Heart left ventricle (tissue), 16 donors: ENCODE measurements at regions of chr6 and their contacts with region 1.

Region 1: DNA sequence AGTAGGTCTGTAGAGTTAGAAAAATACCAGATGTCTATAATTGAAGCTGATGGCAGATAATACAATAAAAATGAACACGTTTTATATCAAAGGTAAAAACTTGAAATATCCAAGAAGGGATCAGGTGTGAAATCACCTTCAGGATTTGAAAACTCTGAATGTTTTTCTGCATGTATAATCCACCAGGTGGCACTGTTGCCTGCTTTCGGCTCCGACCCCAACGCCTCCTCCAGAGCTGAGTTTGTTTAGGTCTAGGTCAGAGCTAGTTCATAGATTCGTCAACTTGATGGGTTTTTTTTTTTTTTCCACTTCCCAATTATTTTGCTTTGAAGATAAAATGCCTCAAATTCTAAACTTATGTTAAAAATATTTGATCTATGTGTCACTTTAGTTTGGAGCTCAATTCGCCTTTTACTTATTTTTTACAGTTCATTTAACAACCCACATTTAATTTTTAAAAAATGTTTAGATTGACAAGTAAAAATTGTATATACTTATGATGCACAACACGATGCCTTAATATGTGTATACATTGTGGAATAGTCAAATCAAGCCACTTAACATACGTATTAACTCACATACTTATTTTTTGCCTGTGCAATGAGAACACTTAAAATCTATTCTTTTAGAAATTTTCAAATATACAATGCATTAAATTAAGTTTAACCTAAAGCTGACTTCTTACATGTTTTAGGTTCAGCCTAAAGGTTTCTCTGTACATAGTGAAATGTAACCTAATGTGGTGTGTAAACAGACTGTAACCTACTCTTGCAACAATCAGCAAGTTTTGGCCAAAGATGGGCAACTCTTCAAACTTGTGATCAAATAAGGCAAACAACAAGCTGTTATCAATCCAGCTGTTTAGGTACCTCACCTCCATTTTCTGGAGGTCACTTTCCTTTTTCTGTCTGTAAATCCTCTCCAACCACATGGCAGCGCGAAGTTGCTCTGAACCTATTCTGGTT is 39.4 kb upstream of the ENPP4 start:
- DNase-seq: peak; percentile 37 to 70 (median 47)
- ATAC-seq: peak in 3 of 4 donors; percentile 63 to 68 (median 67)
- H3K4me3 ChIP-seq: no peak overlapping the region
- H3K27ac ChIP-seq: no peak overlapping the region
- H3K4me1 ChIP-seq: peaks cover 0 to 3% (median 0%) of the 10 kb centered on the region in 12 donors
- H3K27me3 ChIP-seq: peaks cover 0 to 9% (median 0%) of the 10 kb centered on the region in 9 donors
- CTCF ChIP-seq: peak; percentile 71 to 90 (median 84)
- POLR2A ChIP-seq: no peak

Region 2: GRCh38 chr6:46144270-46144669 is 53.9 kb after region 1 on chr6:
- intact Hi-C with region 1: no loop called
- DNase-seq: no peak
- ATAC-seq: peak in 1 of 4 donors; percentile 47
- H3K4me3 ChIP-seq: no peak overlapping the region
- H3K27ac ChIP-seq: peak overlapping the region in 1 of 12 donors; percentile 6
- H3K4me1 ChIP-seq: peaks cover 0 to 24% (median 4%) of the 10 kb centered on the region in 12 donors
- H3K27me3 ChIP-seq: no peaks in the 10 kb centered on the region
- CTCF ChIP-seq: no peak
- POLR2A ChIP-seq: no peak

Region 3: DNA sequence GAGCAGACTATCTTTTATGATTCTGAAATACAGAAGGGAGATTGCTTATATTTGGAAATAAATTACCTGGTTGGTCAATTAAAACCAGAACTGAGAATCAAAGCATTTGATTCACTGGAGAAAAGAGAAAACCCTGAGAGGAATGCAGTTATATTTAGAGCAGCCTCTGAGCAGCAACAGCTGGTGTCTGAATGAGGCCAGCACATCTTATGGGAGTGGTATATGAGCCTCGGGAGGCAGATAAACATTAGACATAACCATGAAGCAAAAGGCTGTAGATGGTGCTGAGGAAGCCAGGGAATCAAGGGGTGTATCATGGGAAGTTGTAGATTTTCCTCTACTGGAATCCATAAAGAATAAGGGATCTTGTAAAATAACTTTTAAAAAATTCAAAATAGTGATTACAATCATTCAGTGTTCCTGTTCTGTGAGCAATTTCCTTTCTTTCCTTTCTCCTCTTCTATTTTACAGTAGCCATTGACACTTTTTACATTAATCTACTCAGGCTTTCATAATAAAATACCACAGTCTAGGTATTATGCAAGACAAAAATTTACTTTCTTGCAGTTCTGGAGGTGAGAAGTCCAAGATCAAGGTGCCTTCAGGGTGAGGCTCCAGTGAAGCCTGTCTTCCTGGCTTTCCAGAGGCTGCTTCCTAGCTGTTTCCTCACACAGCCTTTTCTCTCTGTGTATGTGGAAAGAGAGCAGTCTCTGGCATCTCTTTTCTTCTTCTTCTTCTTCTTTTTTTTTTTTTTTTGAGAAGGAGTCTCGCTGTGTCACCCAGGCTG is 113.2 kb after region 1 on chr6:
- intact Hi-C with region 1: loop called in 6 of 10 experiments (anchors 2 to 10 kb)
- DNase-seq: no peak
- ATAC-seq: no peak
- H3K4me3 ChIP-seq: no peak overlapping the region
- H3K27ac ChIP-seq: no peak overlapping the region
- H3K4me1 ChIP-seq: no peaks in the 10 kb centered on the region
- H3K27me3 ChIP-seq: no peaks in the 10 kb centered on the region
- CTCF ChIP-seq: no peak
- POLR2A ChIP-seq: no peak

Region 4: DNA sequence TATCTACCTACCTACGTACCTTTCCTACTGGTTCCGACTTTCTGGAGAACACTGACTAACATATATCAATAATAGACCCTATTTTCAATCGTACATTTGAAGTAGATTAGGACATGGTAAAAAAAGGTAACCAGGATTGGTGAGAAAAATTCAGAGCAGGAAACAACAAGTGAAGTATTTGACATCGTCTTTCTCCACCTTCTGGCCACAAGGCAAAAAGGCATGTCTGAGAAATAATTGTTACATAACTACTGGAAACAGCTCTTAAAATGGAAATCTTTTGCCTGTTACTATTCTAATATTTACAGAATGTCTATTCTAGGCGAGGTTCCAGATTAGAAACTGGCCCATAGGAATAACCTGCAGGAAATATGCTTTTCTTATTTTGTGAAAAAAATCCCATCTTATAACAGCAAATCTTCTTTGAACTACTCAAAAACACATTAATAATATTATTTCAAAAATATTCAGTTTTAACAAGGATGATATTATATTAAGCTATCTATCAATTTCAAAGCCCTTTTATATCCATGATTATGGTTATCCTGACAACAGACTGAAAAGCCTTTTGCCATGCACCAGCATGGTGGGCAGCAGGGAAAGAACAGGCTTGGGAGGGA is 320.0 kb after region 1 on chr6:
- intact Hi-C with region 1: loop called (anchors 2 to 5 kb)
- DNase-seq: peak in 2 of 5 donors; percentile 16 to 26
- ATAC-seq: peak in 1 of 4 donors; percentile 17
- H3K4me3 ChIP-seq: no peak overlapping the region
- H3K27ac ChIP-seq: peak overlapping the region in 10 of 12 donors; percentile 4 to 63 (median 42)
- H3K4me1 ChIP-seq: peaks cover 3 to 69% (median 40%) of the 10 kb centered on the region in 12 donors
- H3K27me3 ChIP-seq: no peaks in the 10 kb centered on the region
- CTCF ChIP-seq: peak; percentile 57 to 91 (median 78)
- POLR2A ChIP-seq: no peak

Region 5: DNA sequence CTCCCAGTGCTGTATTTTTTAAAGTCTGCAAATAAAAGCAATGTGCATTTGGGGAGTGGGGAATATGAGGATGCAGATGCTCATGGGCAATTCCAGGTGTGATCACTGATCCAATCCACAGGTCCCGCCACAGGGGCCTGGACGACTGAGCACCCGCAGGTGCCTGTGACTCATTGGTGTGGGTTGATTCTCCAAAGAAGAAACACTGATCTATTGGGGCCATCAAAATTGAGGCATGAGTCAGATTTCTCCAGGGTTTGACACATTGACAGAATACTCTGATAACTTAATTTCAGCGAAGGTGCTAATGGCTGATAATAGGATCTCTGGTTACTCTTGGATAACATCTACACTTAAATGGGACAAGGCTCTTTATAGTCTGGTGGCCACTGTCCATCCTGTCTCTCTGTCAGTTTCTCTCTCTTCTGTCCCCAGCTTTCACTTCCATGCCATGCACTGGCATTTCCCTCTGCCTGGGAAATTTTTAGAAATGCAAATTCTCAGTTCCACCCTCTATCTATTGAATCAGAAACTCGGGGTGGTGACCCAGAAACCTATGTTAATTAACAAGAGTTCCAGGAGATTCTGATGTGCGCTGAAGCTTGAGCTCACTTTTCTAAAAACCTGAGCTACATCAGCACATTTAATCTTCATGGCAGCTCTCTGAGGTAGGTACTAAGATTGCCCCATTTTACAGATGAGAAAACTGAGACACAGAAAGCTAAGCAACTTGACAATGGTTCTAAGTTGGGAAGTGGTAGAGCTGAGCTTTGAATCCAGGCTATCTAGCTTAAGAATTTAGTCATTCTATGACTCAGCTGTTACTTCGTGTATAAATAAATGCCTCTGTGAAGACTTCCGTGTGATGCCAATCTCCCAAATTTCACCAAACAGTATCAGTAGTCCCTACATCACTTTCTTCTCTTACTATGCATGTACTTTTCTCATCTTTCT is 411.0 kb after region 1 on chr6:
- intact Hi-C with region 1: loop called in 1 of 10 experiments (anchors 10 kb)
- DNase-seq: no peak
- ATAC-seq: no peak
- H3K4me3 ChIP-seq: no peak overlapping the region
- H3K27ac ChIP-seq: peak overlapping the region in 7 of 12 donors; percentile 32 to 87 (median 62)
- H3K4me1 ChIP-seq: peaks cover 0 to 42% (median 12%) of the 10 kb centered on the region in 12 donors
- H3K27me3 ChIP-seq: no peaks in the 10 kb centered on the region
- CTCF ChIP-seq: no peak
- POLR2A ChIP-seq: no peak

Region 6: GRCh38 chr6:46539866-46540265 is 449.5 kb after region 1 on chr6:
- intact Hi-C with region 1: no loop called
- DNase-seq: no peak
- ATAC-seq: no peak
- H3K4me3 ChIP-seq: no peak overlapping the region
- H3K27ac ChIP-seq: no peak overlapping the region
- H3K4me1 ChIP-seq: no peaks in the 10 kb centered on the region
- H3K27me3 ChIP-seq: no peaks in the 10 kb centered on the region
- CTCF ChIP-seq: no peak
- POLR2A ChIP-seq: no peak

Region 7: GRCh38 chr6:46704562-46704961 is 614.2 kb after region 1 on chr6:
- intact Hi-C with region 1: no loop called
- DNase-seq: no peak
- ATAC-seq: peak in 3 of 4 donors; percentile 41 to 75 (median 56)
- H3K4me3 ChIP-seq: no peak overlapping the region
- H3K27ac ChIP-seq: no peak overlapping the region
- H3K4me1 ChIP-seq: peaks cover 0 to 7% (median 0%) of the 10 kb centered on the region in 12 donors
- H3K27me3 ChIP-seq: no peaks in the 10 kb centered on the region
- CTCF ChIP-seq: peak in 7 of 12 donors; percentile 12 to 34 (median 18)
- POLR2A ChIP-seq: no peak

Region 8: GRCh38 chr6:46993846-46994245 is 903.4 kb after region 1 on chr6:
- intact Hi-C with region 1: loop called in 1 of 10 experiments (anchors 10 kb)
- DNase-seq: no peak
- ATAC-seq: no peak
- H3K4me3 ChIP-seq: no peak overlapping the region
- H3K27ac ChIP-seq: no peak overlapping the region
- H3K4me1 ChIP-seq: peaks cover 0 to 25% (median 16%) of the 10 kb centered on the region in 12 donors
- H3K27me3 ChIP-seq: no peaks in the 10 kb centered on the region
- CTCF ChIP-seq: no peak
- POLR2A ChIP-seq: no peak